ENCODE measurements at regions of chr9 and their contacts with region 1.

Region 1: DNA sequence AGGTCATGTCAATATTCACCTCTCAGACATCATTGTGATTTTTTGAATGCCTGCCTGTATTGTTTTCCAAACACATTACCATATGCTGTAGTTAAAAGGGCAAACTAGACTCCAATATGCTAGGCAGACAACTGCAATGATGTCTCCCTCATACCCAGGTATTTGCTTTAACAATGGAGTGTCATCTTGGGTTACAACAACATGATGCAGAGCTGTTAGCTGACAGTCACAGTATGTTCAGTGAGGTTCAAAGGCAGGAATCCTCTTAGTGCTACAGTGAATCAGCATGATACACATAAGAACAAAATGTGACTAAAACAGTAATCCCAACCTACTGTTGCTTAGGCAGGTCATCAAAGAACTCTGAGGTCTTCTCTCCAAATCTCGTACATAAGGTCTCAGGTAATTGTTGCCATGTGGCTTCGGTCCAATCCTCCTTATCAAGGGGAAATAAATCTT is 24.0 kb downstream of the OR1J1 start:
- DNase-seq: no peak
- ATAC-seq: no peak

Region 2: GRCh38 chr9:122125158-122125508 is 328.6 kb before region 1 on chr9:
- intact Hi-C with region 1: loop called (anchors 5 to 10 kb)
- DNase-seq: peak; percentile 58 to 80
- ATAC-seq: peak; percentile 90

Region 3: GRCh38 chr9:122370869-122371755 is 82.6 kb before region 1 on chr9 and contains the start of gene PTGS1:
- intact Hi-C with region 1: loop called in 1 of 2 experiments (anchors 10 kb)
- DNase-seq: peak; percentile 70 to 73
- ATAC-seq: peak; percentile 79
- total RNA-seq, gene PTGS1: 7.8 to 25.4 TPM

Measured in left colon (tissue), 2 donors.